MCF 10A (cell line): ENCODE measurements at regions of chr19 and their contacts with region 1.

Region 1: DNA sequence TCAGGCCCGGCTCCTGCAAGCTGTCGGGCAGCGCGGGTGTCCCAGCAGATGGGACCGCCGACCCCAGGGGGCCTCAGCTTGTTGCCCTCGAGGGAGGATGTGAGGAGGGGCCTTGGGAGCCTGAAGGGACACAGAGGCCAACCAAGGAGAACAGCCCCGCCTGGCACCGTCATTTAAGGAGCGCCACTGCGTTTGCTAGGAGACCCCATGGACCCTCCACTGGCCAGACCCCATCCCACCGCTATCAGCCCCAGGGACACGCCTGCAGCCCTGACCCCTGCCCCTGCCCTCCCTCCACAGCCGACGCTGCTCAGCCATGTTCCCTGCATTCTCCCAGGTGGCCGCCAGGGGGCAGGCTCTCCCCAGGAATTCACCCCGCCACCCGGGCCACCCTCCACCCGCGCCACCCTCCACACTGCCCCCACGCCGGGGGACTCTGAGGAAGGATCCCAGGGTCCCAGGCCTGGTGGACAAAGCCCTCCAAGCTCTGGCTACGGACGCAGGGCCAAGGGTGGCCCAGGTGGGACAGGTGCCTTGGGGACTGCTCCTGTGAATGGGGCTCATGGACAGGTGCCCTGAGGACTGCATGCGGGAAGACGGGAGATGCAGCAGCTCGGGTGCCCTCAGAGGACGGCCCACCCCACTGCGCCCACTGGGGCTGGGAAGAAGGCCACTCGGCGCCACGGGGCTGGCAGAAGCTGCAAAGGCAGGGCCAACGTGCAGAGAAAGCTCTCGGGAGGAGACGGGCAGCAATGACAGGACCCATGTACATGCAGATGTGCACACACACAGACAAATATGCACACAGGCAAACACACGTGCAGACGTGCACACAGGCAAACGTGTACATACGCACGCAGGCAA is 34.4 kb downstream of the PIP5K1C start:
- DNase-seq: peak; percentile 49
- H3K4me3 Mint-ChIP-seq: no peak overlapping the region
- H3K27ac Mint-ChIP-seq: no peak overlapping the region
- H3K4me1 Mint-ChIP-seq: no peaks in the 10 kb centered on the region
- H3K27me3 Mint-ChIP-seq: no peaks in the 10 kb centered on the region
- CTCF ChIP-seq: peak; percentile 99

Region 2: GRCh38 chr19:3319643-3320353 is 346.1 kb before region 1 on chr19:
- CTCF ChIA-PET with region 1: no interaction called
- POLR2A ChIA-PET with region 1: no interaction called
- intact Hi-C with region 1: no loop called
- DNase-seq: no peak
- H3K4me3 Mint-ChIP-seq: no peak overlapping the region
- H3K27ac Mint-ChIP-seq: no peak overlapping the region
- H3K4me1 Mint-ChIP-seq: no peaks in the 10 kb centered on the region
- H3K27me3 Mint-ChIP-seq: peaks cover 42% of the 10 kb centered on the region
- CTCF ChIP-seq: no peak

Region 3: GRCh38 chr19:3655402-3656072 is 10.4 kb before region 1 on chr19:
- CTCF ChIA-PET with region 1: interaction called, 18 read pairs
- POLR2A ChIA-PET with region 1: no interaction called
- intact Hi-C with region 1: no loop called
- DNase-seq: peak; percentile 87
- H3K4me3 Mint-ChIP-seq: no peak overlapping the region
- H3K27ac Mint-ChIP-seq: no peak overlapping the region
- H3K4me1 Mint-ChIP-seq: no peaks in the 10 kb centered on the region
- H3K27me3 Mint-ChIP-seq: no peaks in the 10 kb centered on the region
- CTCF ChIP-seq: no peak

Region 4: GRCh38 chr19:3707871-3708207 is 41.9 kb after region 1 on chr19:
- CTCF ChIA-PET with region 1: no interaction called
- POLR2A ChIA-PET with region 1: no interaction called
- intact Hi-C with region 1: loop called (anchors 2 kb)
- DNase-seq: no peak
- H3K4me3 Mint-ChIP-seq: no peak overlapping the region
- H3K27ac Mint-ChIP-seq: no peak overlapping the region
- H3K4me1 Mint-ChIP-seq: peaks cover 6% of the 10 kb centered on the region
- H3K27me3 Mint-ChIP-seq: no peaks in the 10 kb centered on the region
- CTCF ChIP-seq: no peak

Region 5: GRCh38 chr19:3852614-3853254 is 186.8 kb after region 1 on chr19:
- CTCF ChIA-PET with region 1: interaction called, 8 read pairs
- POLR2A ChIA-PET with region 1: no interaction called
- intact Hi-C with region 1: loop called (anchors 2 kb)
- DNase-seq: peak; percentile 99
- H3K4me3 Mint-ChIP-seq: no peak overlapping the region
- H3K27ac Mint-ChIP-seq: no peak overlapping the region
- H3K4me1 Mint-ChIP-seq: peaks cover 9% of the 10 kb centered on the region
- H3K27me3 Mint-ChIP-seq: peaks cover 53% of the 10 kb centered on the region
- CTCF ChIP-seq: peak; percentile 62